ENCODE measurements at regions of chr1 and their contacts with region 1.

Region 1: DNA sequence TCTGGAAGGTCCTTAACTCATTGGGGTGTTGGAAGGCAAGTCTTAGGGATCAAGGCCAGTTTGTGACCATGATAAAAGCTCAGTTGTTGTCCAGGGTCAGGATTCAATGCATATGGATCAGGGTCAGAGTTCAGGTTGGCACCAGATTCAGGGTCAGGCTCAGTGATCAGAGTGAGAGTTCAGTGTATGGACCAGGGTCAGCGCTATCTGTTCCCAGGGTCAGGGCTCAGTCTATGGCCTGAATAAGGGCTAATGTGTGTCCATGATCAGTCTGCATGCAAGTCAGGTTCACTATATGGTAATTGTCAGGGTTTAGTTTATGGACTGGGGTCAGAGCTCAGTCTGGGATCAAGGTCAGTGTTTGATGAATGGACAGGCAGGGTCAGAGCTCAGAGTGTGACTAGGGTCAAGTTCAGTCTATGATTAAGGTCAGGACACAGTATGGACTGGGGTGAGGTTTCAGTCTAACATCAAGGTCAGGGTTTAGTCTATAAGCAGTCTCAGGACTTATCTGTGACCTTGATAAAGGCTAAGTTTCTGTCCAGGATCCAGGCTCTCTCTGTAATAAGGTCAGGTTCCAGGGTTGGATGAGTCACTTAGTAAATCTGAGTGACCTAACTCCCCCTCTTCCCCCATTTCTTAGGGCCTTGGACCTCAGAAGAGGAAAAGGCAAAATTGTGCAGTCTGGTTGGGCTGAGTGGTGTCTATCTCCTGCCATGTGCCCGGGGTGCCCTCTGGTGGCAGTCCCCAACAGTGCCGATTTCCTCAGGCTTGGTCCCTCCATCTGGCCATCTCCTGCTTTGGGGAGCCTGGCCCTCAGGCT is 23.8 kb downstream of the KNCN start:
- H3K4me3 ChIP-seq: no peak overlapping the region
- H3K27ac ChIP-seq: no peak overlapping the region
- H3K4me1 ChIP-seq: peaks cover under 1% of the 10 kb centered on the region; the same call in 1 of the 2 replicates
- CTCF ChIP-seq: peak; percentile 85

Region 2: GRCh38 chr1:46401964-46402626 is 125.6 kb before region 1 on chr1:
- CTCF ChIA-PET with region 1: interaction called, 26 read pairs
- POLR2A ChIA-PET with region 1: no interaction called
- H3K4me3 ChIP-seq: no peak overlapping the region
- H3K27ac ChIP-seq: no peak overlapping the region
- H3K4me1 ChIP-seq: no peaks in the 10 kb centered on the region
- CTCF ChIP-seq: no peak

Region 3: GRCh38 chr1:46431691-46432090 is 96.0 kb before region 1 on chr1:
- CTCF ChIA-PET with region 1: interaction called, 18 read pairs
- POLR2A ChIA-PET with region 1: no interaction called
- H3K4me3 ChIP-seq: no peak overlapping the region
- H3K27ac ChIP-seq: no peak overlapping the region
- H3K4me1 ChIP-seq: no peaks in the 10 kb centered on the region
- CTCF ChIP-seq: no peak

Region 4: GRCh38 chr1:46477153-46477929 is 50.3 kb before region 1 on chr1:
- CTCF ChIA-PET with region 1: interaction called, 418 read pairs
- POLR2A ChIA-PET with region 1: no interaction called
- H3K4me3 ChIP-seq: no peak overlapping the region
- H3K27ac ChIP-seq: no peak overlapping the region
- H3K4me1 ChIP-seq: no peaks in the 10 kb centered on the region
- CTCF ChIP-seq: peak; percentile 49

Region 5: GRCh38 chr1:46501528-46501927 is 26.2 kb before region 1 on chr1:
- CTCF ChIA-PET with region 1: interaction called, 11 read pairs
- POLR2A ChIA-PET with region 1: interaction called, 3 read pairs
- H3K4me3 ChIP-seq: no peak overlapping the region
- H3K27ac ChIP-seq: no peak overlapping the region
- H3K4me1 ChIP-seq: no peaks in the 10 kb centered on the region
- CTCF ChIP-seq: no peak

Region 6: DNA sequence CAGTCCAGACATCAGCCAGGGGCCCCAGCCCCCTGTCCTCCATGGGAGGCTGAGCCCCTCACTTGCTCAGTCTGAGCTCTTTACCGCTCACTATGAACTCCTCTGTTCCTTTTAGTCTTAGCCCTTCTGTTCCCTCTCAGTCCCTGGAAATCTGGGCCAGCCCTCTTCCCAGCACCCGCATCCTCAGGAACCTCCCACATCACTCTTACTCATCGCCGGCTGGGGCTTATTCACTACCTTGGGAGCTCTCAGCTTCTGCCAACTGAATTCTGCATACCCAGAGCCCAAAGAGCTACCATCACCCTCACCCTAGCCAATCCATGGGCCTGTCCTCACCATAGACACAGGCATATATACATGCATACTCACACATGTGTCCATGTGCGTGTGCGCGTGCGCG is 12.3 kb after region 1 on chr1:
- CTCF ChIA-PET with region 1: interaction called, 64 read pairs
- POLR2A ChIA-PET with region 1: no interaction called
- H3K4me3 ChIP-seq: no peak overlapping the region
- H3K27ac ChIP-seq: no peak overlapping the region
- H3K4me1 ChIP-seq: no peaks in the 10 kb centered on the region
- CTCF ChIP-seq: no peak

Region 7: GRCh38 chr1:46547481-46548383 is 20.0 kb after region 1 on chr1:
- CTCF ChIA-PET with region 1: interaction called, 64 read pairs
- POLR2A ChIA-PET with region 1: no interaction called
- H3K4me3 ChIP-seq: no peak overlapping the region
- H3K27ac ChIP-seq: no peak overlapping the region
- H3K4me1 ChIP-seq: no peaks in the 10 kb centered on the region
- CTCF ChIP-seq: peak; percentile 33; the same call in 1 of the 2 replicates